ENCODE measurements at regions of chr16 and their contacts with region 1.

Region 1: GRCh38 chr16:56576585-56577293 is 11.9 kb downstream of the MT4 start:
- DNase-seq: peak; percentile 80
- H3K4me3 Mint-ChIP-seq: no peak overlapping the region
- H3K27ac Mint-ChIP-seq: no peak overlapping the region
- H3K4me1 Mint-ChIP-seq: peaks cover 8% of the 10 kb centered on the region
- H3K27me3 Mint-ChIP-seq: peaks cover 13% of the 10 kb centered on the region

Region 2: DNA sequence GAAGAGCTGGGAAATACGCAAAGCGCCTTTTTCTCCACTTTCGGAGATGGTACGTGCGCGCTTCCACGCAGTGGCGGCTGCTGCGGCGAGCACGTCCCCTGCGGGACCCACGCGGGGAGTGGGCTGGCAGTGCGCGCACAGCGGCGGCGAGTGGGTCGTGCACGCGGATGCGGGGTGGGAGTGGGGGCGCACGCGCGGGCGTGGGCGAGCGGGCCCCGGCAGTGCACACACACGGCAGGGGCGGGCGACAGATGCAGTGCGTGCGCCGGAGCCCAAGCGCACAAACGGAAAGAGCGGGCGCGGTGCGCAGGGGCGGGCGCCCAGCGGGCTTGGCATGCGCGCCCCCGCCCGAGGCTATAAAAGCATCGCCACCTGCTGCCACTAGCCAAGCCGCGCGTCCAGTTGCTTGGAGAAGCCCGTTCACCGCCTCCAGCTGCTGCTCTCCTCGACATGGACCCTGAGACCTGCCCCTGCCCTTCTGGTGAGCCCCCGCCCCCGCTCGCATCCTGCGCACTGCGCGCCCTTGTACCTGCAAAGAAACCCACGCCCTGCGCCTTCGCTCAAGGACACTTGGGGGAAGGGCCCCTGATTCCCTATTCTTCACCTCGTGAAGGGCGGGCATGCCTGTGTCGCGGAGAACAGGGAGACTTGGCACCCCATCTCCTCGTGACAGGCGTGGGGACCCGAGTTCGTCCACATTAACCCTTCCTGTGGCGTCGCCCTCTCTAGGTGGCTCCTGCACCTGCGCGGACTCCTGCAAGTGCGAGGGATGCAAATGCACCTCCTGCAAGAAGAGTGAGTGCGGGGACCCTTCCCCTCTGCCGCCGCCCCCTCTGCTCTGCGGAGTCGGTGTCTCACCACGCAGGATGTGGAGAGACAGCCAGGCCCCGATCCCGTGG is 12.7 kb after region 1 on chr16 and contains the start of gene MT3:
- intact Hi-C with region 1: no loop called
- DNase-seq: no peak
- H3K4me3 Mint-ChIP-seq: peak within 1 kb of the TSS; percentile 84
- H3K27ac Mint-ChIP-seq: no peak within 1 kb of the TSS
- H3K4me1 Mint-ChIP-seq: peaks cover 14% of the 10 kb centered on the region
- H3K27me3 Mint-ChIP-seq: peaks cover 35% of the 10 kb centered on the region
- total RNA-seq, gene MT3: 7.5 and 7.9 TPM in 2 replicates

Region 3: GRCh38 chr16:56600398-56600999 is 23.8 kb after region 1 on chr16:
- intact Hi-C with region 1: loop called (anchors 1 kb)
- DNase-seq: no peak
- H3K4me3 Mint-ChIP-seq: no peak overlapping the region
- H3K27ac Mint-ChIP-seq: no peak overlapping the region
- H3K4me1 Mint-ChIP-seq: peaks cover 13% of the 10 kb centered on the region
- H3K27me3 Mint-ChIP-seq: peaks cover 26% of the 10 kb centered on the region

Region 4: GRCh38 chr16:56625140-56625942 is 48.6 kb after region 1 on chr16 and contains the start of gene MT1E:
- intact Hi-C with region 1: loop called (anchors 5 kb)
- DNase-seq: peak; percentile 67
- H3K4me3 Mint-ChIP-seq: peak within 1 kb of the TSS; percentile 94
- H3K27ac Mint-ChIP-seq: peak within 1 kb of the TSS; percentile 95
- H3K4me1 Mint-ChIP-seq: peaks cover 24% of the 10 kb centered on the region
- H3K27me3 Mint-ChIP-seq: peaks cover 5% of the 10 kb centered on the region
- total RNA-seq, gene MT1E: 181 and 184 TPM in 2 replicates

Region 5: GRCh38 chr16:56681939-56682702 is 105.4 kb after region 1 on chr16 and contains the start of gene MT1X:
- intact Hi-C with region 1: no loop called
- DNase-seq: peak; percentile 83
- H3K4me3 Mint-ChIP-seq: peak within 1 kb of the TSS; percentile 94
- H3K27ac Mint-ChIP-seq: peak within 1 kb of the TSS; percentile 84
- H3K4me1 Mint-ChIP-seq: peaks cover 24% of the 10 kb centered on the region
- H3K27me3 Mint-ChIP-seq: no peaks in the 10 kb centered on the region
- total RNA-seq, gene MT1X: 58.2 and 62.3 TPM in 2 replicates

Region 6: GRCh38 chr16:57152096-57153093 is 575.7 kb after region 1 on chr16:
- intact Hi-C with region 1: no loop called
- DNase-seq: no peak
- H3K4me3 Mint-ChIP-seq: no peak overlapping the region
- H3K27ac Mint-ChIP-seq: peak overlapping the region; percentile 2
- H3K4me1 Mint-ChIP-seq: peaks cover 17% of the 10 kb centered on the region
- H3K27me3 Mint-ChIP-seq: no peaks in the 10 kb centered on the region

Measured in activated T-helper 2 cell treated with anti-CD3 and anti-CD28 coated beads, Interferon-gamma antibody, Interleukin-2, Interleukin-4, amounts not matched to agents 10 μg/mL and 5 μg/mL and 100 μg/mL, durations not matched to agents 14 hours and 24 hours and 36 hours (primary cell).